Right lobe of liver (tissue), 6 donors: ENCODE measurements at regions of chr10 and their contacts with region 1.

Region 1: GRCh38 chr10:112159469-112159868 is 24.1 kb downstream of the GPAM start:
- DNase-seq: no peak
- ATAC-seq: peak; percentile 48 to 94 (median 80)
- H3K4me3 ChIP-seq: no peak overlapping the region
- H3K27ac ChIP-seq: peak overlapping the region in 1 of 3 donors; percentile 67
- H3K4me1 ChIP-seq: peaks cover 0 to 3% (median 0%) of the 10 kb centered on the region in 4 donors
- H3K27me3 ChIP-seq: no peaks in the 10 kb centered on the region
- CTCF ChIP-seq: no peak
- POLR2A ChIP-seq: no peak

Region 2: GRCh38 chr10:112026438-112026837 is 133.0 kb before region 1 on chr10:
- intact Hi-C with region 1: no loop called
- DNase-seq: no peak
- ATAC-seq: peak in 1 of 4 donors; percentile 36
- H3K4me3 ChIP-seq: no peak overlapping the region
- H3K27ac ChIP-seq: no peak overlapping the region
- H3K4me1 ChIP-seq: no peaks in the 10 kb centered on the region
- H3K27me3 ChIP-seq: no peaks in the 10 kb centered on the region
- CTCF ChIP-seq: peak; percentile 12 to 26 (median 18)
- POLR2A ChIP-seq: no peak

Region 3: DNA sequence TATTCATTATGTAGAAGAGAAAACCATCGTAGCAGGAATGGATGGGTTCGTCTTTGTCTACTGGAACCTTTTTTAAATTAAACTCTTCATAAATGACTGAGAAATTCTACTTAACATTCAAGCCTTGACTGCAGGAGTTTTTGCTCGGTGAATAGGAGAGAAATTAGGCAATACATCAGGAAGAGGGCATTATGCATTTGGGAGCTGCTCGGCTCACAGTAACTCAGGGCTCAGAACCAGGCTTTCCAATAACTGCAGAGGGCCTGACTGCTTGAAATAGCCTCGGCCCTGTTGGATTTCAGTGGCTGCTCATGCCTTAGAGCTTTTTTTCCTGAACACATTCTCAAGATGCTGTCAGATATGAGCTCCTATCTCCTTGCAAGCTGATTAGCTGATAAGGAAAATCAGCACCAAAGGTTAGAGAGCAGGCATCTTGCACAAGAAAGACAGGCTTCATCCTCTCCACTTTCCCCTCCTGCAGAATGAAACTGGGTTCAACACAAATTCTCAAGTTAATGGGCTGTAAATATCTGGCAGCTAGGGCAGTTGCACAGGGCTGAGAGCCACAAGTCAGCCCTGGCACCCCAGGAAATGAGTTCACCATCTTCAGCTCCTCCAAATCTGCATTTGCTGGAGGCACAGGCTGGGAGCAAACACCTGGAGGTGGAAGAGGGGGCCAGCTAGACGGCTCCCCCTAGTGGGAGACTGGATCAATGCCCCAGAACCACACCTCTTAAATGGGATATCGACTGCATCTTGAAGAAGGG is 148.1 kb after region 1 on chr10:
- intact Hi-C with region 1: loop called in 1 of 2 experiments (anchors 5 kb)
- DNase-seq: peak; percentile 49 to 76 (median 68)
- ATAC-seq: peak; percentile 73 to 88 (median 77)
- H3K4me3 ChIP-seq: no peak overlapping the region
- H3K27ac ChIP-seq: peak overlapping the region in 2 of 3 donors; percentile 35 to 38
- H3K4me1 ChIP-seq: peaks cover 0 to 62% (median 20%) of the 10 kb centered on the region in 4 donors
- H3K27me3 ChIP-seq: no peaks in the 10 kb centered on the region
- CTCF ChIP-seq: peak; percentile 75 to 89 (median 82)
- POLR2A ChIP-seq: no peak